ENCODE measurements at regions of chr1 and their contacts with region 1.

Region 1: DNA sequence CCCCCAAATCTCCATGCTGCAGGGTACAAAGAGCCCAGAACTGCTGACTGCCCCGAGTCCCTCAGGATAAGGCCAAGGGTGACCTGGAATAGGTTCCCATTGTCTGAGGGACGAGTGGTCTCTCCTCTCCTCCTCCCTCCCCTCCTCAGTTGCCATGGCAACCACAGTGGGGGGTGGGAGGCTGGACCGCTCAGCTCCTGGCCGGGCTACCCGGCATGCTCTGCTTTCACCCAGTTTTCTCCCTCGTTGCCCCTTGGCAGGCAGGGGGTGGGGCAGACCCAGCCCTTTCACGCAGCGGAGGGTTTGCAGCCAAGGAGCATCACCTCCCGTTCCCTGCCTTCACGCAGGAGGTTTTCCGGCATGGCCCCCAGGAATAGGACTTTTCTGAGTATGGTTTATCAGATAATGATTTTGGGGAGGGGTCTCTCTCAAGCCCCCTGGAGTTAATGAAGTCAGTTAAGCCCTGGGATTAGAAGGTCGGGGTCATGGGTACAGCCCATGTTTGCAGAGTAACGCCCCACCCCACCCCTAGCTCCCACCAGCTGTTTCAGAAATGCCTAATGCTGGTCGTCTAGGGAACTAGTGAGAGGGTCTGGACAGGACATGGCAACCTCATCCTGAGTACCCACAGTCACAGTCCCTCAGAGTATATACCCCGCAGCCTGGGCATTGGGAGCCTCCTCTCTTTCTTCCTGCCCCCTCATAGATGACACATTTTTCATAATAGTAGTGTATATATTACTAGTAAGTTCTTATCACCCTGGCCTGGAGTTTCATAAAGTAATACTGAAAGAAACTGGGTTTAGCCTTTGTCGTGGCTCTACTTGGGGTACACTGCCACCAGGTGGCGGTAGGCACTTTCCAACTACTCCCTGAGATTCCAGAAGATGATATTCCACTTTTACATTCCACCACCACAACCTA is 20.7 kb downstream of the C1QB start:
- DNase-seq: no peak
- ATAC-seq: peak; percentile 83
- H3K4me3 ChIP-seq: no peak overlapping the region
- H3K27ac ChIP-seq: no peak overlapping the region
- H3K4me1 ChIP-seq: no peaks in the 10 kb centered on the region
- H3K27me3 ChIP-seq: peaks cover 2% of the 10 kb centered on the region in 2 experiments; a peak in 2 of 4 replicates
- CTCF ChIP-seq: peak; percentile 66 to 70 (median 69)
- EP300 ChIP-seq: no peak
- POLR2A ChIP-seq: no peak
- RAD21 ChIP-seq: peak; percentile 58

Region 2: GRCh38 chr1:22930235-22930912 is 256.6 kb after region 1 on chr1:
- CTCF ChIA-PET with region 1: interaction called, 5 read pairs
- POLR2A ChIA-PET with region 1: no interaction called
- RAD21 ChIA-PET with region 1: interaction called, 4 read pairs
- SMC1A ChIA-PET with region 1: interaction called, 3 read pairs
- in situ Hi-C with region 1: no loop called
- intact Hi-C with region 1: loop called (anchors 1 kb)
- DNase-seq: no peak
- ATAC-seq: peak; percentile 76
- H3K4me3 ChIP-seq: no peak overlapping the region
- H3K27ac ChIP-seq: no peak overlapping the region
- H3K4me1 ChIP-seq: no peaks in the 10 kb centered on the region
- H3K27me3 ChIP-seq: no peaks in the 10 kb centered on the region; a peak in 1 of 4 replicates
- CTCF ChIP-seq: peak; percentile 65 to 74 (median 71)
- EP300 ChIP-seq: no peak
- POLR2A ChIP-seq: no peak
- RAD21 ChIP-seq: peak; percentile 66

Region 3: DNA sequence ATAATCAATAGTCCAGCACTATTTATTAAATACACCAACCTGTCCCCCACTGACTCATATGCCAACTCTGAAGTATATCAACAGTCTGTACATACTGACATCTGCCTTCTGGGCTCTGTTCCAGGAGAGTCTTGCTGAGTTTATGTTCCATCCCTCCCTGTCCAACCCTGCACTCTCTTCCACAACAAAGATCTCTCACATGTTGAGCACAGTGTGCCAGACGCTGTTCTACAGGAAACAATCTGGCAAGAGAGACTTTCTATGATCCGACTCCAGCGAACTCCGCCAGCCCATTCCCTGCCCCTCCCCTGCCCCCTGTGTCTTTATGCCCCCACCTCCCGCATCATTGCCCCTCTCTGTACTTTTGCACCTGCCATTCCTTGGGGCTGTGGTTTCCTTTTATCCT is 295.6 kb after region 1 on chr1:
- CTCF ChIA-PET with region 1: interaction called, 4 read pairs
- POLR2A ChIA-PET with region 1: no interaction called
- RAD21 ChIA-PET with region 1: no interaction called
- SMC1A ChIA-PET with region 1: no interaction called
- in situ Hi-C with region 1: no loop called
- intact Hi-C with region 1: loop called (anchors 1 kb)
- DNase-seq: no peak
- ATAC-seq: no peak
- H3K4me3 ChIP-seq: no peak overlapping the region
- H3K27ac ChIP-seq: no peak overlapping the region
- H3K4me1 ChIP-seq: no peaks in the 10 kb centered on the region
- H3K27me3 ChIP-seq: peaks cover 0 to 5% of the 10 kb centered on the region in 2 experiments; a peak in 3 of 4 replicates
- CTCF ChIP-seq: no peak
- EP300 ChIP-seq: no peak
- POLR2A ChIP-seq: no peak
- RAD21 ChIP-seq: no peak

Measured in GM12878 (cell line).